K562 (cell line): ENCODE measurements at regions of chr3 and their contacts with region 1.

Region 1: DNA sequence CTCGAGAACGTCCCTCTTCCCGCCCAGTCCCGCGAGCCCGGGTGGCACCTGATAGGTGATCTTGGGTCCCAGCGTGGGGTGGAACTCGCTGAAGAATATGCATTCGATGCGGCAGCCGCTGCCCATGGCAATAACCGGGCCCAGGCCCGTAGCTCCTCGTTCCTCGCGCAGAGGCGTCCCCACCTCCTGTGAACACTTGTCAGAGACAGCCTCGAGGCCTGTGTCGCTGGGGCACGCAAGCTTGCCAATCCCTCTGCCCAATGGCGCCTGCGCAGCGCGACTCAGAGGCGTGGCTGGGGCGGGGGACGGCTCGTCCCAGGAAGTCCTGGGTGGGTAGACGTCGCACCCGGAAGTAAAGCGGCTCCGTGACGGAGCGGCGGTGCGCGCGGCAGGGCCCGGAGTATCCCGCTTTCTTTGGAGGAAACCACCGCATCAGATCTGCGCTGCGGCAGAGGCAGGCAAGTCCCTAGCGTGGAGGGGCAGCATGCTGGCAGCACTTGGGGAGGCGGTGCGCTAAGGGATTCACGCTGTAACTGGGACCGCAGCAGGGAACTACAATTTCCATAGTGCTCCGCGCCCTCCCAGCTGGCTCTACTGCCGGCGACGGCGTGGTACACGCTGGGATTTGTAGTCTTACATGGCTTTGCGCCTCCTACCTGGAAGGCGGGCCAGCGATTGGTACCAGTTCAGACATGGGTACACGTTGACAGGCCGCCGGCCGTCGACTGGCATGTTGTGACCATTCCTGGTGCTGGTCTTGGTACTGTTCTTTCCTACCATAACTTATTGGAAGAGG is at the starts of genes CYB561D2 and NPRL2:
- DNase-seq: peak; percentile 85 to 90 (median 89)
- ATAC-seq: peak; percentile 97
- H3K4me3 ChIP-seq: peak within 1 kb of the TSS; percentile 72
- H3K27ac ChIP-seq: peak within 1 kb of the TSS; percentile 77
- H3K4me1 ChIP-seq: peaks cover 13 to 43% of the 10 kb centered on the region in 2 experiments; a peak in 4 of 5 replicates
- H3K27me3 ChIP-seq: no peaks in the 10 kb centered on the region
- CTCF ChIP-seq: no peak
- EP300 ChIP-seq: no peak
- POLR2A ChIP-seq: peak; percentile 71
- RAD21 ChIP-seq: no peak
- polyA plus RNA-seq, gene CYB561D2: 4.2 to 9.1 TPM
- polyA plus RNA-seq, gene NPRL2: 27.5 to 40.4 TPM

Region 2: DNA sequence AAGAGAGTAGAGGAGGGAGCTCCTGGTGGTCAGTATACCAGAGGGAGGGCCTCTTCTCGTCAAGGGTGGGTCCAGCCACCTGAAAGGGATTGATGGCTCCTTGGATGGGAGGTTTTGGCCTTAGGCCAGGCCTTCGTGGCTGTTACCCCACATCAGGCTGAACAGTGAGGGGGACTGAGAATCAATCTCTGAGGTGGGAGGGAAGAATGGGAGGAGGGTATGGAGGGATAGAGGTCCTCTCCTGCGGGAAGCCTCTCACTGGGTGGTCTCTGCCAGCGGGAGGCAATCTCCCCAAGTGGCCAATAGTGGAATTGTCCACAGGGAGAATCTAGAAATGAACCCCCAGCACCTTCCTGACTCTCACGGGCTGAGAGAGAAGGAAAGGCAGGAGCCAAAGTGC is 742.9 kb before region 1 on chr3:
- CTCF ChIA-PET with region 1: no interaction called
- POLR2A ChIA-PET with region 1: no interaction called
- in situ Hi-C with region 1: no loop called
- intact Hi-C with region 1: no loop called
- DNase-seq: peak in 2 of 4 experiments; percentile 9 to 14
- ATAC-seq: peak; percentile 64
- H3K4me3 ChIP-seq: no peak overlapping the region
- H3K27ac ChIP-seq: no peak overlapping the region
- H3K4me1 ChIP-seq: peaks cover 0 to 2% of the 10 kb centered on the region in 2 experiments; a peak in 2 of 5 replicates
- H3K27me3 ChIP-seq: no peaks in the 10 kb centered on the region
- CTCF ChIP-seq: peak in 2 of 3 experiments; percentile 30 to 54; a peak in 5 of 6 replicates
- EP300 ChIP-seq: no peak
- POLR2A ChIP-seq: no peak
- RAD21 ChIP-seq: no peak

Region 3: GRCh38 chr3:50008931-50009330 is 341.8 kb before region 1 on chr3:
- CTCF ChIA-PET with region 1: no interaction called
- POLR2A ChIA-PET with region 1: no interaction called
- in situ Hi-C with region 1: no loop called
- intact Hi-C with region 1: no loop called
- DNase-seq: no peak
- ATAC-seq: no peak
- H3K4me3 ChIP-seq: no peak overlapping the region
- H3K27ac ChIP-seq: no peak overlapping the region
- H3K4me1 ChIP-seq: no peaks in the 10 kb centered on the region; a peak in 1 of 5 replicates
- H3K27me3 ChIP-seq: no peaks in the 10 kb centered on the region
- CTCF ChIP-seq: no peak
- EP300 ChIP-seq: no peak
- POLR2A ChIP-seq: no peak
- RAD21 ChIP-seq: no peak

Region 4: GRCh38 chr3:50337191-50337841 is 13.4 kb before region 1 on chr3:
- CTCF ChIA-PET with region 1: no interaction called
- POLR2A ChIA-PET with region 1: interaction called, 12 read pairs
- in situ Hi-C with region 1: no loop called
- intact Hi-C with region 1: no loop called
- DNase-seq: peak; percentile 92 to 98 (median 95)
- ATAC-seq: peak; percentile 86
- H3K4me3 ChIP-seq: peak overlapping the region; percentile 96
- H3K27ac ChIP-seq: peak overlapping the region; percentile 99
- H3K4me1 ChIP-seq: peaks cover 27 to 47% of the 10 kb centered on the region in 2 experiments; a peak in 4 of 5 replicates
- H3K27me3 ChIP-seq: no peaks in the 10 kb centered on the region
- CTCF ChIP-seq: no peak
- EP300 ChIP-seq: peak; percentile 17; the same call in 1 of the 2 replicates
- POLR2A ChIP-seq: peak; percentile 84
- RAD21 ChIP-seq: no peak

Region 5: DNA sequence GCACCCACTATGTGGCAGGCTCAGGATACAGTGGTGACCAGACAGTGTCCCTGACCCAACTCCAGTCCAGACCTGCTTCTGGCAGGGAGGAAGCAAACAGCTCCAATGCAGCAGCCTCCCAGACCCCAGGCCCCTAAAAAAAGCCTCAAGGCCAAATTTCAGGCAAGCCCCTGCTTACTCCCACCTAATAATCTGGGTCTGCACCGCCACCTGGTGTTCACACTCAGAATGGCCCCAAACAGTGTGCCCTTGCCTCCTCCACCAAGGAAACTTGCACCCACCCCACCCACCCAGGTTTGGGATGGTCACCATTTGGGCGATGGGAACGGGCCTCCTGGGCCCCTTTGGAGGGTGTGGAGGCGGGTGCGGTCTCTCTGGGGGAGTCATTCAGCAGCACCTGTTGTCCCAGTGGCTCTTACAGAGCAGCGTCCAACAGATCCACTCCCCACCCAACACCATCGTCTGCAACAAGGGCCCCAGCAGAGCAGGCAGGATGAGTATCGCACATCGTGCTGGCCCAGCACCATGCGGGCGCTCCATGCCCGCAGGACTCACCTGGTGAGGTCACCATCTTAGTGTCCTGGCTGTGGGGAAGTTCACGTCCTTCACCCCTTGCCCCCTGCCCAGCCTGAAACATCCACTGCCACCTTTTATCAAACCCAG is 199.5 kb after region 1 on chr3:
- CTCF ChIA-PET with region 1: interaction called, 10 read pairs
- POLR2A ChIA-PET with region 1: no interaction called
- in situ Hi-C with region 1: no loop called
- intact Hi-C with region 1: no loop called
- DNase-seq: peak; percentile 66 to 69 (median 68)
- ATAC-seq: peak; percentile 90
- H3K4me3 ChIP-seq: no peak overlapping the region
- H3K27ac ChIP-seq: no peak overlapping the region
- H3K4me1 ChIP-seq: peaks cover 0 to 6% of the 10 kb centered on the region in 2 experiments; a peak in 2 of 5 replicates
- H3K27me3 ChIP-seq: no peaks in the 10 kb centered on the region
- CTCF ChIP-seq: peak; percentile 69 to 80 (median 74)
- EP300 ChIP-seq: no peak
- POLR2A ChIP-seq: no peak
- RAD21 ChIP-seq: peak; percentile 57 to 70

Region 6: GRCh38 chr3:51024765-51025632 is 674.3 kb after region 1 on chr3:
- CTCF ChIA-PET with region 1: no interaction called
- POLR2A ChIA-PET with region 1: no interaction called
- in situ Hi-C with region 1: no loop called
- intact Hi-C with region 1: no loop called
- DNase-seq: peak in 1 of 4 experiments; percentile 1
- ATAC-seq: peak; percentile 54; the same call in 2 of the 3 replicates
- H3K4me3 ChIP-seq: no peak overlapping the region
- H3K27ac ChIP-seq: no peak overlapping the region
- H3K4me1 ChIP-seq: no peaks in the 10 kb centered on the region; a peak in 1 of 5 replicates
- H3K27me3 ChIP-seq: no peaks in the 10 kb centered on the region
- CTCF ChIP-seq: no peak
- EP300 ChIP-seq: no peak
- POLR2A ChIP-seq: no peak
- RAD21 ChIP-seq: no peak